GM18951 (cell line): ENCODE measurements at regions of chr2 and their contacts with region 1.

Region 1: GRCh38 chr2:10434886-10435819 is 13.0 kb downstream of the ODC1 start:
- POLR2A ChIP-seq: no peak

Region 2: GRCh38 chr2:10064932-10065772 is 370.0 kb before region 1 on chr2:
- in situ Hi-C with region 1: loop called (anchors 10 kb)
- POLR2A ChIP-seq: no peak

Region 3: DNA sequence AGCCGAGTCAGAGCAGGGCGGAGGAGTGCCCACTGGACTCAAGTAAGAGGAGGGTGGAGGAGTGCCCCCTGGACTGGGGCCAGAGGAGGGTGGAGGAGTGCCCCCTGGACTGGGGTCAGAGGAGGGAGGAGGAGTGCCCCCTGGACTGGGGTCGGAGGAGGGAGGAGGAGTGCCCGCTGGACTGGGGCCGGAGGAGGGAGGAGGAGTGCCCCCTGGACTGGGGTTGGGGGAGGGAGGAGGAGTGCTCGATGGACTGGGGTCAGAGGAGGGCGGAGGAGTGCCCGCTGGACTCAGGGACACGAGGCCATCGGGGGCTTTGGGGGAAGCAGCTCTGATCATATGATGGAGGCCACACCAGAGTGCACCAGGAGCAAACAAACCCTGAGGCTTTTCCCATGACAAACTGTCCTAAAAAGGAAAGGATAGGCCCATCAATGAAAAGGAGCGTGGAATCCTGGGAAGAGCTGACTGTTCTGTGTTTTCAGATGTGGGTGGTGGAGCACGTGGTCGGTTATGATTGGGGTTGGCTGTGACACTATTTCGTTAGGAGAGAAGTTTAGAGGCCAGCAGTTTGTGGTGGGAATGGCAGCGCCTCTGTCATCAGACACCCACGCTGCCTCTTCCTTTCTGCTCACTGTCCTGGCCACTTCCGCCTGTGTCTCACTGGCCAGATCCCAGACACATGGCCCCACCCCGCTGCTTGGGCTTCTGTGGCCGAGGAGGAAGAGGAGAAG is 157.0 kb before region 1 on chr2:
- in situ Hi-C with region 1: loop called (anchors 10 kb)
- POLR2A ChIP-seq: no peak

Region 4: DNA sequence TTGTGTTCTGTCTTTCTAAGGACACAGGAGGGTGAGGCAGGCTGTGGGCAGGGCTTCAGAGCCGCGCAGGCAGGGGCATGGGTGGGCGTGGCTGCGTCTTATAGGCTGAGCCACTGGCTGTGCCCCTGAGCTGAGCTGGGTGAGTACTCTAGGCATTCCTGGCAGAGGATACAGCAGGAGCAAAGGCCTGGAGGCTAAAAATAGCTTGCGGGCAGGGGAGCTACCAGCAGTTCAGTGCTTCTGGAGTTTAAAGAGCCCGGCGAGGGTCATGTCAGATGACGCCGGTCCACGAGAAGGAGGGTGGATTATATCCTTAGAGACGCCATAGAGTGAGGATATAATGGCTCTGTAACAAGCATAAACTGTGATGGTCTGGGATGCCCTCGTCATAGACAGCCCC is 408.9 kb after region 1 on chr2:
- in situ Hi-C with region 1: no loop called
- POLR2A ChIP-seq: no peak